Activated CD4-positive, alpha-beta memory T cell treated with anti-CD3 and anti-CD28 coated beads, Interleukin-2, amount 10 ng/mL, durations not matched to agents 7 days and 5 days (primary cell): ENCODE measurements at regions of chr4 and their contacts with region 1.

Region 1: GRCh38 chr4:88533937-88534750 is 10.6 kb upstream of the PYURF start:
- DNase-seq: no peak
- H3K4me3 Mint-ChIP-seq: no peak overlapping the region
- H3K27ac Mint-ChIP-seq: no peak overlapping the region
- H3K4me1 Mint-ChIP-seq: peaks cover 1% of the 10 kb centered on the region
- H3K27me3 Mint-ChIP-seq: no peaks in the 10 kb centered on the region

Region 2: GRCh38 chr4:88523325-88524129 is 10.6 kb before region 1 on chr4 and contains the start of gene PYURF:
- CTCF ChIA-PET with region 1: interaction called, 18 read pairs
- POLR2A ChIA-PET with region 1: no interaction called
- DNase-seq: peak; percentile 79
- H3K4me3 Mint-ChIP-seq: peak within 1 kb of the TSS; percentile 83
- H3K27ac Mint-ChIP-seq: peak within 1 kb of the TSS; percentile 53
- H3K4me1 Mint-ChIP-seq: peaks cover 45% of the 10 kb centered on the region
- H3K27me3 Mint-ChIP-seq: no peaks in the 10 kb centered on the region
- total RNA-seq, gene PYURF: 50.8 to 52.1 TPM

Region 3: GRCh38 chr4:88613417-88613875 is 79.3 kb after region 1 on chr4:
- CTCF ChIA-PET with region 1: interaction called, 16 read pairs
- POLR2A ChIA-PET with region 1: no interaction called
- DNase-seq: peak; percentile 34
- H3K4me3 Mint-ChIP-seq: peak overlapping the region; percentile 44
- H3K27ac Mint-ChIP-seq: peak overlapping the region; percentile 76
- H3K4me1 Mint-ChIP-seq: peaks cover 54% of the 10 kb centered on the region
- H3K27me3 Mint-ChIP-seq: no peaks in the 10 kb centered on the region

Region 4: GRCh38 chr4:88659055-88659889 is 125.1 kb after region 1 on chr4:
- CTCF ChIA-PET with region 1: interaction called, 37 read pairs
- POLR2A ChIA-PET with region 1: interaction called, 3 read pairs
- DNase-seq: peak; percentile 37
- H3K4me3 Mint-ChIP-seq: no peak overlapping the region
- H3K27ac Mint-ChIP-seq: no peak overlapping the region
- H3K4me1 Mint-ChIP-seq: peaks cover 11% of the 10 kb centered on the region
- H3K27me3 Mint-ChIP-seq: no peaks in the 10 kb centered on the region

Region 5: DNA sequence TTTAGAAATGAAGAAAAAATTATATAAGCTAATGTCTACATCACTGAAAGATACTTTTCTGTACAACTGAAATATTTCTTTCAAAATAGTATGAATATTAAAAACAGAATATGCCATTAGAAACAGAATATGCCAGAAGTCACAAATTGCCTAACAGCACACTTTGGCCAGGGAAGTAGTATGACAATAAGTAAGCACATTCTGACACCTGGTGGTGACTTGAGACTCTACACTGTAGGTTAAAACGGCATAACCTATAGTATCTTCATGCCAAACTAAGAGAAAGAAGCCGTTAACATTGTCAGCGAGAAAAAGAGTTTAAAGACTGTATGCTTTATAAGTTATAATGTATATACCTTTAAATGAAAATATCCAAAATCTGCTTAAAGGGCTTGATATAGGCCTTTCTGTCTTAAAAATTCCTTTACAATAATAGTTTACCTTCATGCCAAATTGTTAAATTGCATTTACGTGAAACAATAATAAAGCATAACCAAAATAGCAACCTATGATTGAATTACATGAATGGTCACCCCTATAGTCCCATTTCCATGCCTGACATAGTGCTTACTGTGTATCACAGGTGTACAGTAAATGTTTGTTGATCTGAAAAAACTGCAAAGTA is 490.0 kb after region 1 on chr4:
- CTCF ChIA-PET with region 1: interaction called, 16 read pairs
- POLR2A ChIA-PET with region 1: no interaction called
- DNase-seq: peak; percentile 44
- H3K4me3 Mint-ChIP-seq: no peak overlapping the region
- H3K27ac Mint-ChIP-seq: no peak overlapping the region
- H3K4me1 Mint-ChIP-seq: no peaks in the 10 kb centered on the region
- H3K27me3 Mint-ChIP-seq: no peaks in the 10 kb centered on the region